A549 (cell line): ENCODE measurements at regions of chrX and their contacts with region 1.

Region 1: DNA sequence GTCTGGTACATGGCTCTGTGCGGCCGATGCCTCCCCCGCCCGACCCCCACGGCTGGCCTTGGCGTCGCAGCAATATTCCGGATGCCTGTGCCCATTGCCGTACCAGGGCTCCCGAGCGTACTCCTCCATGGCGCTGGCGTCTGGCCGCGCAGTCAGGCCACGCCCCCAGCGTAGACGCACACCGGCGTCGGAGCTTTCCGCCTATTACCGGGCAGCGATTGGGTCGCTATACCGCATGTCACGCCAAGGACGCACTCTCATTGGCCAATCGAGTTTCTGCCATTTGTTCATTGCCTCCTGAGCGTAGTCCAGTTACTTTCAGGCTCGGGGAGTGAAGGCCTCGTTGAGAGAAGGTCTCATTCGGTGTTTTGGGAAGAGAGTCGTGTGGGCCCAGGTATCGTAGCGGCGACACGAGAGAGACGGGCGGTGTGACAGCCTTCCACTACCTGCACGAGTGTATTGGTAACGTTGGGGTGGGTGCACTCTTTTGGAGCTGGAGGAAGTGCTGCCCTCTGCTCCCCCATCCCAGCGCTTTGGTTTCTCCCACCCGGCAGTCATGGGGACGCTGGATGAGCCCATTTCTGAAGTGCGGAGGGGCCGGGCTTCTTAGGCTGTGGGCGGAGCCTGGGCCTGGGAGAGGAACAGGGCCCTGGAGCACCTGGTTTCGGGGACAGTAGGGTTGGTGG is at the starts of genes PQBP1 and TIMM17B:
- DNase-seq: peak; percentile 89 to 98
- ATAC-seq: peak; percentile 93 to 94
- H3K4me3 ChIP-seq: peak within 1 kb of the TSS; percentile 87
- H3K27ac ChIP-seq: peak within 1 kb of the TSS; percentile 94 to 97
- H3K4me1 ChIP-seq: peaks cover 16% of the 10 kb centered on the region
- CTCF ChIP-seq: no peak
- EP300 ChIP-seq: no peak
- POLR2A ChIP-seq: peak; percentile 80
- RAD21 ChIP-seq: no peak
- polyA plus RNA-seq, gene PQBP1: 119 and 125 TPM in 2 replicates
- polyA plus RNA-seq, gene TIMM17B: 68.9 and 71.8 TPM in 2 replicates

Region 2: GRCh38 chrX:47751670-47752069 is 1146.1 kb before region 1 on chrX:
- CTCF ChIA-PET with region 1: no interaction called
- POLR2A ChIA-PET with region 1: no interaction called
- DNase-seq: peak in 1 of 2 experiments; percentile 25
- ATAC-seq: peak; percentile 56 to 74; a peak in 5 of 6 replicates
- H3K4me3 ChIP-seq: no peak overlapping the region
- H3K27ac ChIP-seq: no peak overlapping the region
- H3K4me1 ChIP-seq: no peaks in the 10 kb centered on the region
- CTCF ChIP-seq: peak; percentile 30
- EP300 ChIP-seq: no peak
- POLR2A ChIP-seq: no peak
- RAD21 ChIP-seq: peak; percentile 45 to 54; a peak in 4 of 5 replicates

Region 3: GRCh38 chrX:48864210-48864609 is 33.6 kb before region 1 on chrX:
- CTCF ChIA-PET with region 1: interaction called, 3 read pairs
- POLR2A ChIA-PET with region 1: interaction called, 12 read pairs
- DNase-seq: no peak
- ATAC-seq: no peak
- H3K4me3 ChIP-seq: no peak overlapping the region
- H3K27ac ChIP-seq: peak overlapping the region in 1 of 2 experiments; percentile 18; a peak in 2 of 6 replicates
- H3K4me1 ChIP-seq: peaks cover 17% of the 10 kb centered on the region
- CTCF ChIP-seq: no peak
- EP300 ChIP-seq: no peak
- POLR2A ChIP-seq: no peak
- RAD21 ChIP-seq: no peak

Region 4: GRCh38 chrX:48911412-48912182 is 13.8 kb after region 1 on chrX and contains the start of gene SLC35A2:
- CTCF ChIA-PET with region 1: interaction called, 14 read pairs
- POLR2A ChIA-PET with region 1: interaction called, 15 read pairs
- DNase-seq: peak; percentile 79 to 87
- ATAC-seq: peak; percentile 95 to 96
- H3K4me3 ChIP-seq: peak within 1 kb of the TSS; percentile 99
- H3K27ac ChIP-seq: peak within 1 kb of the TSS; percentile 81 to 94
- H3K4me1 ChIP-seq: peaks cover 13% of the 10 kb centered on the region
- CTCF ChIP-seq: no peak
- EP300 ChIP-seq: no peak
- POLR2A ChIP-seq: peak; percentile 65
- RAD21 ChIP-seq: no peak
- polyA plus RNA-seq, gene SLC35A2: 39.4 and 64.2 TPM in 2 replicates

Region 5: GRCh38 chrX:48989483-48989882 is 91.7 kb after region 1 on chrX:
- CTCF ChIA-PET with region 1: no interaction called
- POLR2A ChIA-PET with region 1: no interaction called
- DNase-seq: no peak
- ATAC-seq: no peak
- H3K4me3 ChIP-seq: no peak overlapping the region
- H3K27ac ChIP-seq: no peak overlapping the region
- H3K4me1 ChIP-seq: no peaks in the 10 kb centered on the region
- CTCF ChIP-seq: no peak
- EP300 ChIP-seq: no peak
- POLR2A ChIP-seq: no peak
- RAD21 ChIP-seq: no peak